MCF 10A (cell line): ENCODE measurements at regions of chr21 and their contacts with region 1.

Region 1: DNA sequence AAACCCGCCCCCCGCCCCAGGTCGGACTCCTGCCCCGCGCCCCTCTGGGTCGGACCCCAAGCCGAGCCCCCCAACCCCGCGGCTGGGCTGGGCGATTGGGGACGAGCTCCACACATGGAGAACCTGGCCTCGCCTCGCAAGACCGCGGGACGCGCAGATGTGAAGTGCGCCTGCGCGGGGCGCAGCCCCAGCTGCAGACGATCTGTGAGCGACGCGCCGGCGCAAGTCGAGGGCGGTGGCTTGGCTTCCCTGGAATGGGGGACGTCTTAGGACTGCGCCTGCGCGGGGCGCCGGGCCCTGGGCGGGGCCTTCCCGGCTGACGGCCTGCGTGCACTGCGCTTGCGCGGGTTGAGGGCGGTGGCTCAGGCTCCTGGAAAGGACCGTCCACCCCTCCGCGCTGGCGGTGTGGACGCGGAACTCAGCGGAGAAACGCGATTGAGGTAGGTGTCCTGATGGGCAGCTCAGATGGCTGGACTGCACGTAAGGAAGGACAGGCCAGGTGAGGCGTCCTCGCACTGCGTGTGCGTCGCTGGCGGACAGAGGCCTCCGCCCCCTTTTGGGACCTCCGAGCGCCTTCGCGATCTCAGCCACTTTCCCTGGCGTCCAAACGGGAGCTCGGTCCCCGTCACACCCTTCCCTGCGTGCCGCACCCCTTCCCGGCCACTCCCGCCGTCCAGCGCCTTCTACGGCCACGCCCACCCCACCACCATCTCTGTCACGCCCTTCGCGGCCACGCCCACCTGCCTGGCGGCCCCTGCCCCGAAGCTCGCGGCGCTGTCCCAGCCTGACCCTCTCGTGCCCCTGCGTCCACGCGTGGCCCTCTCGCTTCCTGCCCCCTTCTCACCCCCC is at the start of gene PRMT2:
- DNase-seq: peak; percentile 97
- H3K4me3 Mint-ChIP-seq: peak within 1 kb of the TSS; percentile 96
- H3K27ac Mint-ChIP-seq: peak within 1 kb of the TSS; percentile 91
- H3K4me1 Mint-ChIP-seq: peaks cover 28% of the 10 kb centered on the region
- H3K27me3 Mint-ChIP-seq: peaks cover 13% of the 10 kb centered on the region
- CTCF ChIP-seq: no peak
- total RNA-seq, gene PRMT2: 60.2 and 62.2 TPM in 2 replicates

Region 2: DNA sequence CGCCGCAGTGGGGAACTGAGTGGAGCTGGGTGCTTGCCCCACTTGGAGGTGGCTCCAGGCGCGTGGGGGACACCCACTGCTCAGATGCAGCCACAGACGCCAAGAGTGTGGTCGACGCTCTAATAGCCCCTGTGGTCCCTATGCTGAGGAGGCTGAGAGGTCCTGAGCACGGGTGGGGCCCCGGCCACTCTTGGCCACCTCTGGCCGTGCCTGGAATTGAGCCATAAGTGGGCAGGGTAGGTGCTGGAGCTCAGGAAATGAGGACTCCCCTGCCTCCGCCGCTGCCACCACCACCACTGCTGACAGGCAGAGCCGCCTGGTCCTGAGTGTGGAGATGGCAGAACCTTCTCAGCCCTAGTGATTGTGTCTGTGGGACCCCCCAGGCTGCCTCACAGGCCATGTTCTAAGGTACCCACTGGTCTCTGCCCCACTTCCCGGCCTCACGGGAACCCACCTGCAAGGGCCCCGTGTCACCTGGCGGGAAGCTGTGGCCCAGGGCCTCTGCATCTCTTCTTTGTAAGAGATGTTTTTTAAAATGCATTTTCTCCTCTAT is 211.4 kb before region 1 on chr21:
- CTCF ChIA-PET with region 1: no interaction called
- POLR2A ChIA-PET with region 1: no interaction called
- intact Hi-C with region 1: no loop called
- DNase-seq: no peak
- H3K4me3 Mint-ChIP-seq: no peak overlapping the region
- H3K27ac Mint-ChIP-seq: no peak overlapping the region
- H3K4me1 Mint-ChIP-seq: no peaks in the 10 kb centered on the region
- H3K27me3 Mint-ChIP-seq: no peaks in the 10 kb centered on the region
- CTCF ChIP-seq: no peak

Region 3: GRCh38 chr21:46458315-46459023 is 177.1 kb before region 1 on chr21 and contains the start of gene DIP2A:
- CTCF ChIA-PET with region 1: interaction called, 5 read pairs
- POLR2A ChIA-PET with region 1: interaction called, 43 read pairs
- intact Hi-C with region 1: loop called (anchors 1 kb)
- DNase-seq: peak; percentile 97
- H3K4me3 Mint-ChIP-seq: peak within 1 kb of the TSS; percentile 79
- H3K27ac Mint-ChIP-seq: peak within 1 kb of the TSS; percentile 78
- H3K4me1 Mint-ChIP-seq: peaks cover 9% of the 10 kb centered on the region
- H3K27me3 Mint-ChIP-seq: no peaks in the 10 kb centered on the region
- CTCF ChIP-seq: no peak
- total RNA-seq, gene DIP2A: 39.6 and 55.1 TPM in 2 replicates

Region 4: DNA sequence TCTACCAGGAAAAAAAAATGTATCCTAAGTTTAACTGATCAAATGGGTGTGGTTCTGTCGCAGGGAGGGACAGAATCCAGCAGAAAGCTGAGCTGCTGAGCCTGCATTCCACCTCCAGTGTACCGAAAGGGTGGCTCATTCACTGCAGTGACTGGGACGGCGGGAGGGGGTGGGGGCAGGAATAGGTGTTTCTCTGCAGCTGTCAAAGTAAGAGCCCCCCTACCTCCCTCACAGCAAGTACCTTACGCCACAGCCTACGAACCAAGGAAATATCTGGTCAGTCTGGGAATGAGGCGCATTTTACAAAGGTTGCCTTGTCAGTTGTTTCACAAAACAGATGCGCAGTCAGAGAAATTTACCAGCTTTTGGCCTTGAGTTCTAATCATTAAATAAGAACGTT is 32.3 kb before region 1 on chr21:
- CTCF ChIA-PET with region 1: interaction called, 5 read pairs
- POLR2A ChIA-PET with region 1: interaction called, 10 read pairs
- intact Hi-C with region 1: no loop called
- DNase-seq: no peak
- H3K4me3 Mint-ChIP-seq: no peak overlapping the region
- H3K27ac Mint-ChIP-seq: no peak overlapping the region
- H3K4me1 Mint-ChIP-seq: no peaks in the 10 kb centered on the region
- H3K27me3 Mint-ChIP-seq: peaks cover under 1% of the 10 kb centered on the region
- CTCF ChIP-seq: no peak

Region 5: GRCh38 chr21:46661627-46662366 is 26.2 kb after region 1 on chr21:
- CTCF ChIA-PET with region 1: interaction called, 3 read pairs
- POLR2A ChIA-PET with region 1: interaction called, 11 read pairs
- intact Hi-C with region 1: no loop called
- DNase-seq: no peak
- H3K4me3 Mint-ChIP-seq: no peak overlapping the region
- H3K27ac Mint-ChIP-seq: no peak overlapping the region
- H3K4me1 Mint-ChIP-seq: peaks cover 11% of the 10 kb centered on the region
- H3K27me3 Mint-ChIP-seq: no peaks in the 10 kb centered on the region
- CTCF ChIP-seq: no peak

Region 6: DNA sequence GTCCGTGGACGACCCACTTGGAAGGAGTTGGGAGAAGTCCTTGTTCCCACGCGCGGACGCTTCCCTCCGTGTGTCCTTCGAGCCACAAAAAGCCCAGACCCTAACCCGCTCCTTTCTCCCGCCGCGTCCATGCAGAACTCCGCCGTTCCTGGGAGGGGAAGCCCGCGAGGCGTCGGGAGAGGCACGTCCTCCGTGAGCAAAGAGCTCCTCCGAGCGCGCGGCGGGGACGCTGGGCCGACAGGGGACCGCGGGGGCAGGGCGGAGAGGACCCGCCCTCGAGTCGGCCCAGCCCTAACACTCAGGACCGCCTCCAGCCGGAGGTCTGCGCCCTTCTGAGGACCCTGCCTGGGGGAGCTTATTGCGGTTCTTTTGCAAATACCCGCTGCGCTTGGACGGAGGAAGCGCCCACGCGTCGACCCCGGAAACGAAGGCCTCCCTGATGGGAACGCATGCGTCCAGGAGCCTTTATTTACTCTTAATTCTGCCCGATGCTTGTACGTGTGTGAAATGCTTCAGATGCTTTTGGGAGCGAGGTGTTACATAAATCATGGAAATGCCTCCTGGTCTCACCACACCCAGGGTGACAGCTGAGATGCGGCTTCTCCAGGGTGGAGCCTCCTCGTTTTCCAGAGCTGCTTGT is 32.3 kb after region 1 on chr21:
- CTCF ChIA-PET with region 1: no interaction called
- POLR2A ChIA-PET with region 1: interaction called, 11 read pairs
- intact Hi-C with region 1: no loop called
- DNase-seq: peak; percentile 43
- H3K4me3 Mint-ChIP-seq: peak overlapping the region; percentile 77
- H3K27ac Mint-ChIP-seq: peak overlapping the region; percentile 23
- H3K4me1 Mint-ChIP-seq: peaks cover 21% of the 10 kb centered on the region
- H3K27me3 Mint-ChIP-seq: no peaks in the 10 kb centered on the region
- CTCF ChIP-seq: no peak